H1 (cell line): ENCODE measurements at regions of chr1 and their contacts with region 1.

Region 1: GRCh38 chr1:212928323-212929291 is 21.7 kb upstream of the VASH2 start:
- DNase-seq: peak in 1 of 2 experiments; percentile 54
- H3K4me3 ChIP-seq: peak overlapping the region in 1 of 4 experiments; percentile 16; a peak in 1 of 8 replicates
- H3K27ac ChIP-seq: peak overlapping the region; percentile 5; the same call in 1 of the 2 replicates
- H3K4me1 ChIP-seq: peaks cover 9 to 20% (median 14%) of the 10 kb centered on the region in 4 experiments
- H3K27me3 ChIP-seq: no peaks in the 10 kb centered on the region
- CTCF ChIP-seq: no peak
- EP300 ChIP-seq: no peak
- POLR2A ChIP-seq: no peak
- RAD21 ChIP-seq: no peak

Region 2: DNA sequence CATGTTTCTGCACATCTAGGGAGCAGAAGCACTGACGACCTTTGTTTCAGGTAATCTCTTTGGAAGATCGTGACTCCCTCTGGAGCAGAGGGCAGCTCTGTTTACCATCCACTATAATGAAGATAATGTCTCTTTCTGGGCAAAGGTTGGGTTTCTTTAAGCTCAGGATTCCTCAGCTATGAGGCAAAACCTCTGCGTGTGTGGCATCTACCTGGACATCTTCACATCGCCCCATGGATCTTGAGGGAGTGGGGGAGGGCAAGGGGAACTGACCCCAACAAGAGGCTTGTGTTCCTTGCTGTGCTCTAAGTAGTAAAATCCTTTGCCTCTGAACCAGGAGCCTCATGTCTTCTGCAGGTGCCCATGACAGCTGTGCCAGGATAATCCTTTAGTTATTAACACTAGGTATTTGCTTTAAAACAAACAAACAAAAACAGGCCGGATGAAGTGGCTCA is 100.8 kb before region 1 on chr1:
- CTCF ChIA-PET with region 1: no interaction called
- POLR2A ChIA-PET with region 1: no interaction called
- DNase-seq: no peak
- H3K4me3 ChIP-seq: no peak overlapping the region
- H3K27ac ChIP-seq: no peak overlapping the region
- H3K4me1 ChIP-seq: peaks cover 0 to 2% (median 0%) of the 10 kb centered on the region in 4 experiments; a peak in 1 of 7 replicates
- H3K27me3 ChIP-seq: no peaks in the 10 kb centered on the region
- CTCF ChIP-seq: no peak
- EP300 ChIP-seq: no peak
- POLR2A ChIP-seq: no peak
- RAD21 ChIP-seq: no peak

Region 3: DNA sequence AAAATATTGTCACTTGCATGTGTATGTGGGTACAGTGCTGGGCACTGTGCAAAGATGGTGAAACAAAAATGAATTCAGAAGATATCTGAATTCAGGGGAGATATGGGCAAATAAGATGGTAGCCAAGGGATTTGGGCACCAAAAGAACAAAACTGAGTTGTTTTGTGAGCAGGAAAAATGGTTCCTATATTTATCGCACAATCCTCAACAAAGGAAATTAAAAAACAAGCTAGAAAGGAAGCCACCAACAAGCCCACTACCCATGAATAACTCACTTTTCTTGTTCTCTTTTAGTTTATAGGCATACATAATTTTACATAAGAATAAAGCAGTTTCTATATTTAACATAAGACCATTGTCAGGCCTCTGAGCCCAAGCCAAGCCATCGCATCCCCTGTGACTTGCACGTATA is 18.9 kb before region 1 on chr1:
- CTCF ChIA-PET with region 1: no interaction called
- POLR2A ChIA-PET with region 1: interaction called, 40 read pairs
- DNase-seq: peak in 1 of 2 experiments; percentile 73
- H3K4me3 ChIP-seq: peak overlapping the region in 3 of 4 experiments; percentile 3 to 49 (median 13); a peak in 4 of 8 replicates
- H3K27ac ChIP-seq: peak overlapping the region; percentile 91
- H3K4me1 ChIP-seq: peaks cover 5 to 18% (median 14%) of the 10 kb centered on the region in 4 experiments; a peak in 6 of 7 replicates
- H3K27me3 ChIP-seq: no peaks in the 10 kb centered on the region
- CTCF ChIP-seq: no peak
- EP300 ChIP-seq: no peak
- POLR2A ChIP-seq: peak in 1 of 2 experiments; percentile 44; a peak in 1 of 3 replicates
- RAD21 ChIP-seq: no peak

Region 4: DNA sequence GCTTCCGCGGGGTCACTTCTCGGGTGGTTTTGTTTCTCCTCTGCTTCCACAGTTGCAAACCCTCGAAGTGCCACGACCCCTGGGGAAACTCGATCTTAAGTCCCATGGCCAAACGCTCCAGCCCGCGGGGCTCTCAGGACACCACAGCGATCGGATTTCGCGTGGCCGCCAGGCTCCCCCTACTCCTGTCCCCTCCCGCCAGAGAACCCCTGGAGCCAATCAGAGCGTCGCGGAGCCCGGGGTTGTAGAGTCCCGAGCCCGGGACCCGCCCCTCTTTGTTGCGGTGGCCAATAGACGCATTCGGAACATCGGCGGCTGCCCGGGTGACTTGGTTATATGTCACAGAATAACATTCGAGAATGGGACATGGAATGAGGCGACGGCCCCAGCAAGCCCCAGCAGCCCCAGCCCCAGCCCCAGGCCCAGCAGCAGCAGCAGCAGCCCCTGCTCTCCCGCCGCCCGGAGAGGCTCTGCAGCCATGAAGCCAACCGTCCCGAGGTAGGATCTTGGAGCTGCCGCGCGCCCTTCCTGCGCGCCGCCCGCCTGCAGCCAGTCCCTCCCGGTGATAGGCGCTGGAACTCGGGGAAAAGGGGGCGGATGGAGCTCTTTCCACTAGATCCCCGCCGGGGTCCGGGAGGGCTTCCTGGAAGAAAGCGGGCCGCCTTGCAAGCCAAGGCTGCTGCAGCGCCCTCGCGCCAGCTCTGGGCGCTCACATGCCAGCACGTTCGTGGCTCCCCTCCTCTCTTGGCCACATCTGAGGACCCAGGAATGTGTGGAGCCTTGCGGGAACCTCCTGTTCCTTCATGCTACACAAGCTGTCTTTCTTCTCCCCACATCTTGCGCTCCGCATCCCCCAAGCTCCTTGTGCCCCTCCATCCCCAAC is 21.9 kb after region 1 on chr1 and contains the start of gene VASH2:
- CTCF ChIA-PET with region 1: interaction called, 8 read pairs
- POLR2A ChIA-PET with region 1: interaction called, 11 read pairs
- DNase-seq: peak; percentile 47 to 89
- H3K4me3 ChIP-seq: peak within 1 kb of the TSS; percentile 55 to 95 (median 94)
- H3K27ac ChIP-seq: no peak within 1 kb of the TSS
- H3K4me1 ChIP-seq: peaks cover 3 to 15% (median 11%) of the 10 kb centered on the region in 4 experiments
- H3K27me3 ChIP-seq: peaks cover 0 to 4% (median 0%) of the 10 kb centered on the region in 4 experiments; a peak in 1 of 7 replicates
- CTCF ChIP-seq: no peak
- EP300 ChIP-seq: no peak
- POLR2A ChIP-seq: peak in 1 of 2 experiments; percentile 31; a peak in 1 of 3 replicates
- RAD21 ChIP-seq: no peak
- total RNA-seq, gene VASH2: 184 and 187 TPM in 2 replicates

Region 5: GRCh38 chr1:212959266-212960220 is 30.9 kb after region 1 on chr1:
- CTCF ChIA-PET with region 1: interaction called, 5 read pairs
- POLR2A ChIA-PET with region 1: interaction called, 10 read pairs
- DNase-seq: no peak
- H3K4me3 ChIP-seq: no peak overlapping the region
- H3K27ac ChIP-seq: peak overlapping the region; percentile 7; the same call in 1 of the 2 replicates
- H3K4me1 ChIP-seq: peaks cover 3 to 12% (median 7%) of the 10 kb centered on the region in 4 experiments; a peak in 5 of 7 replicates
- H3K27me3 ChIP-seq: no peaks in the 10 kb centered on the region
- CTCF ChIP-seq: no peak
- EP300 ChIP-seq: no peak
- POLR2A ChIP-seq: no peak
- RAD21 ChIP-seq: no peak